ENCODE measurements at regions of chr22 and their contacts with region 1.

Region 1: GRCh38 chr22:50306753-50307749 is at the start of gene PLXNB2:
- DNase-seq: peak; percentile 76
- H3K4me3 ChIP-seq: peak within 1 kb of the TSS; percentile 72 to 95 (median 83)
- H3K27ac ChIP-seq: peak within 1 kb of the TSS; percentile 79
- H3K4me1 ChIP-seq: peaks cover 27% of the 10 kb centered on the region
- H3K27me3 ChIP-seq: no peaks in the 10 kb centered on the region
- CTCF ChIP-seq: no peak
- POLR2A ChIP-seq: peak; percentile 79
- total RNA-seq, gene PLXNB2: 134 and 139 TPM in 2 replicates

Region 2: DNA sequence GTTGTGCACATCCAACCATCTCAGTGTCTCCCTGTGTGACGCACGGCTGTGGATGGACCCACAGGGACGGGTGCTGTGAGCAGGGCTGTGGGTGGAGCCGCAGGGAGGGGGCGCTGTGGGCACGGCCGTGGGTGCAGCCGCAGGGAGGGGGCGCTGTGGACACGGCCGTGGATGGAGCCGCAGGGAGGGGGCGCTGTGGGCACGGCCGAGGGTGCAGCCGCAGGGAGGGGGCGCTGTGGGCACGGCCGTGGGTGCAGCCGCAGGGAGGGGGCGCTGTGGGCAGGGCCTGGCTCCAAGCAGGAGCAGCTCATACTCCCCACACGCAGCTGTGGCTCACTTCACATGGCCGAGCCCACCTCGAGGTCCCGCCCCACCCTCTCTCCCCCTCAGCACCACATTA is 30.9 kb before region 1 on chr22:
- CTCF ChIA-PET with region 1: interaction called, 20 read pairs
- POLR2A ChIA-PET with region 1: no interaction called
- dilution Hi-C with region 1: no loop called
- intact Hi-C with region 1: loop called (anchors 2 kb)
- DNase-seq: peak; percentile 43
- H3K4me3 ChIP-seq: no peak overlapping the region
- H3K27ac ChIP-seq: no peak overlapping the region
- H3K4me1 ChIP-seq: peaks cover 6% of the 10 kb centered on the region
- H3K27me3 ChIP-seq: no peaks in the 10 kb centered on the region
- CTCF ChIP-seq: peak; percentile 38 to 50
- POLR2A ChIP-seq: no peak

Region 3: DNA sequence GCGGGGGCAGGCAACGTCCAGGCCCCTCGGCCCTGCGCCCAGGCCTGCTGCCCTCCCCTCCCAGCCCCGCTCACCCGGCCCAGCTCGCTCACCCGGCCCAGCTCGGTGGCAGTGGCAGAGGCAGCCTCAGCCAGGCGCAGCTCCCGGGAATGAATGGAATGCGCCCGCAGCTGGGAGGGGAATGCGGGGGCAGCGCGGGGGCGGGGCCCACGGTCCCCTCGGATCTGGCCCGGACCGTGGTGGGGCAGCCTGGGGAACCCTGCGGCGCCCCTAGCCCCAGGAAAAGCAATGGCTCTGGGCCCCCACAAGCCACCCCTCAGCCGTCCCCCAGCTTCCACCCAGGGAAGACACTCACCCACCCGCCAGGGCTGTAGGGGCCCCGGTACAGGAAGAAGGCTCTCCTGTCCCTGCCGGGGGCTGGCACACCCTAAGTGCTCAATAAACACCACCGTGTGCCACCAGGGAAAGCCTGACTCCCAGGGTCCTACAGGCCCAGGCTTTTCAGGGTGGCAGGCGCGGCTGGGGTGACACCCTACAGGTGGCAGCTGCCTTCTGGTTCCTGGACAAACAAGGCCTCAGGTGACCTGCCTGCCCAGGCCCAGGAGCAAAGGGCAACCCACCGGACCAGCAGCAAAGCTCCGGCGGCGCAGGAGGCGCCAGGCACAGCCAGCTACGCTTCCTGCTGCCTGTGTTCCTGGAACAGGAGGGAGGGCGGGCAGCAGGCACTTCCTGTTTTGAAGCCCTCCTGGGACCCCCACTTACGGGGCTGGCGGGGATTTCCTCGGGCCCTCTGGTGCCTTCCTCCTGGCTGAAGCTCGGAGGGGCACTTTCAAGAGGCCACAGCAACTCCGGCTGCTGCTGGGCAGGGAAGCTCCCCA is 13.4 kb before region 1 on chr22:
- CTCF ChIA-PET with region 1: interaction called, 26 read pairs
- POLR2A ChIA-PET with region 1: interaction called, 9 read pairs
- dilution Hi-C with region 1: no loop called
- intact Hi-C with region 1: loop called (anchors 1 kb)
- DNase-seq: peak; percentile 83
- H3K4me3 ChIP-seq: peak overlapping the region in 2 of 3 experiments; percentile 6 to 22
- H3K27ac ChIP-seq: peak overlapping the region; percentile 92
- H3K4me1 ChIP-seq: peaks cover 20% of the 10 kb centered on the region
- H3K27me3 ChIP-seq: no peaks in the 10 kb centered on the region
- CTCF ChIP-seq: peak in 1 of 2 donors; percentile 1
- POLR2A ChIP-seq: peak; percentile 9

Region 4: DNA sequence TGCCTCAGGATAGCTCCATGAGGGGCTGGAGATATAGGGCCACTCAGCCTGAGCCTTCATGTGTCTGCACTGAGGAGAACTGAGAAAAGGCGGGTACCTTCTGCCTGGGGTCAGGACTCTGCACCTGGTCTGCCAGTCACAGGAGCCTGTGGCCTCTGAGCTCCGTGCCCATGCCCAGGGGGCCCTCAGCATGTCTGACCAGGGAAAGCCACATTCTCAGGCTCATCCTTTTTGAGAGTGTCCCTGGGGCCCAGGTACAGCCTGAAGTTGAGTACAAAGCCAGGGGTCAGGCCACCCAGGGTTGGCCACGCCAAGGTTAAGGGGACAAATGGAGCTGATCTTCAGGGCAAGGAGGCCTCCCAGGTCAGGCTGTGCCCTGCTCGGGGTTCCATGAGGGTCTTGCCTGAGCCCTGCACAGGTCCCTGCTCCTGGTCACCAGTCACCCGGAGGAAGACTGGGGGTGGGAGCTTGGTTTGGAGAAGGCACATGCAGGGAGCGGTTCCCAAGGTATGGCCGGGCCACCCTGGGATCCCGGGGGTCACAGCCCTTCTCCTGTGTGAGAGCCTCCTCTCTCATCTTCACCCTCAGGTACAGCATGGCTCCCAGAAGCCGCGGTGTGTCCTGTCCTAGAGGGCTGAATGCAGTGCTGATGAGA is 13.7 kb after region 1 on chr22:
- CTCF ChIA-PET with region 1: interaction called, 16 read pairs
- POLR2A ChIA-PET with region 1: no interaction called
- dilution Hi-C with region 1: no loop called
- intact Hi-C with region 1: no loop called
- DNase-seq: no peak
- H3K4me3 ChIP-seq: no peak overlapping the region
- H3K27ac ChIP-seq: no peak overlapping the region
- H3K4me1 ChIP-seq: no peaks in the 10 kb centered on the region
- H3K27me3 ChIP-seq: no peaks in the 10 kb centered on the region
- CTCF ChIP-seq: no peak
- POLR2A ChIP-seq: no peak

Region 5: DNA sequence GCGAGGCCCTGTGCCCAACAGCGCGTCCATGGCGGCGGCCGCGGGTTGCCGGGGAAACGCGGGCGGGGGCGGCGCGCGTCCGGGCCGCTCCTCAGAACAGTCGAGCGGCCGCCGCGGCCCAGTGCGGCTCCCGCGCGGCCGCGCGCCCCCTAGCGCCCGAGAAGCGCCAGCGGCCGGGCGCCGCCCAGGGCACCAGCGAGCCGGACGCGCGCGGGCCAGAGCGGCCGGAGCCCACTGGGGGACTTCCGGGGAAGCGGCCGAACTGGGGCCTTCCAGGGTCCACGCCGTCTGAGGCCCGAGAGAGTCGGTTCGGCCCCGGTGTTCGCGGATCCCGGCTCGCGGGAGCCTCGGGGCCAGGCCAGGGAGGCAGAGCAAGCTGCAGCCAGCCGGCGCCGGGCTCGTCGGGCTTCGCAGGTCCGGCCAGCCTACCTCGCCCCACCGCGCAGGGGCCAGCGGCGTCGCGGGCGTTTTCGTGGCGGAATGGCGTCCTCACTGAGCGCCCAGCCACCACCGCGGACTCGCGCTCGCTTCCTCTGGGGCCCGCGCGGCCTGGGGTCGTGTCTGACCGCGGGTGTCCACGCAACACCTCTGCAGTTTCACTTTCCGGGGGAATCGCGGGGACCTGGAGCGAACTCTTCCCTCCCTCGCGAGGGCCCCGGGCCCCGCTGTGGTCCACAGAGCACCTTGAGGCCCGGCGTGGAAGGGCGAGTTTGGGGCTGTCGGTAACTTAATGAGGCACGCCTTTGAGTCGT is 20.1 kb after region 1 on chr22 and contains the start of gene DENND6B:
- CTCF ChIA-PET with region 1: interaction called, 16 read pairs
- POLR2A ChIA-PET with region 1: no interaction called
- dilution Hi-C with region 1: no loop called
- intact Hi-C with region 1: loop called (anchors 2 kb)
- DNase-seq: peak; percentile 64
- H3K4me3 ChIP-seq: peak within 1 kb of the TSS; percentile 16 to 58 (median 56)
- H3K27ac ChIP-seq: peak within 1 kb of the TSS; percentile 70
- H3K4me1 ChIP-seq: peaks cover 9% of the 10 kb centered on the region
- H3K27me3 ChIP-seq: no peaks in the 10 kb centered on the region
- CTCF ChIP-seq: peak; percentile 33 to 68
- POLR2A ChIP-seq: peak; percentile 89
- total RNA-seq, gene DENND6B: 2.9 and 5.9 TPM in 2 replicates

Measured in endothelial cell of umbilical vein (primary cell).